ENCODE measurements at regions of chr16 and their contacts with region 1.

Region 1: GRCh38 chr16:71499775-71500364 is 10.7 kb upstream of the ZNF19 start:
- DNase-seq: peak in 8 of 9 donors; percentile 24 to 65 (median 48)
- ATAC-seq: peak; percentile 82
- H3K4me3 ChIP-seq: no peak overlapping the region
- H3K4me3 Mint-ChIP-seq: no peak overlapping the region
- H3K27ac ChIP-seq: no peak overlapping the region
- H3K27ac Mint-ChIP-seq: no peak overlapping the region
- H3K4me1 ChIP-seq: no peaks in the 10 kb centered on the region
- H3K4me1 Mint-ChIP-seq: no peaks in the 10 kb centered on the region
- H3K27me3 ChIP-seq: no peaks in the 10 kb centered on the region
- H3K27me3 Mint-ChIP-seq: peaks cover 0 to 17% (median 5%) of the 10 kb centered on the region in 5 donors

Region 2: DNA sequence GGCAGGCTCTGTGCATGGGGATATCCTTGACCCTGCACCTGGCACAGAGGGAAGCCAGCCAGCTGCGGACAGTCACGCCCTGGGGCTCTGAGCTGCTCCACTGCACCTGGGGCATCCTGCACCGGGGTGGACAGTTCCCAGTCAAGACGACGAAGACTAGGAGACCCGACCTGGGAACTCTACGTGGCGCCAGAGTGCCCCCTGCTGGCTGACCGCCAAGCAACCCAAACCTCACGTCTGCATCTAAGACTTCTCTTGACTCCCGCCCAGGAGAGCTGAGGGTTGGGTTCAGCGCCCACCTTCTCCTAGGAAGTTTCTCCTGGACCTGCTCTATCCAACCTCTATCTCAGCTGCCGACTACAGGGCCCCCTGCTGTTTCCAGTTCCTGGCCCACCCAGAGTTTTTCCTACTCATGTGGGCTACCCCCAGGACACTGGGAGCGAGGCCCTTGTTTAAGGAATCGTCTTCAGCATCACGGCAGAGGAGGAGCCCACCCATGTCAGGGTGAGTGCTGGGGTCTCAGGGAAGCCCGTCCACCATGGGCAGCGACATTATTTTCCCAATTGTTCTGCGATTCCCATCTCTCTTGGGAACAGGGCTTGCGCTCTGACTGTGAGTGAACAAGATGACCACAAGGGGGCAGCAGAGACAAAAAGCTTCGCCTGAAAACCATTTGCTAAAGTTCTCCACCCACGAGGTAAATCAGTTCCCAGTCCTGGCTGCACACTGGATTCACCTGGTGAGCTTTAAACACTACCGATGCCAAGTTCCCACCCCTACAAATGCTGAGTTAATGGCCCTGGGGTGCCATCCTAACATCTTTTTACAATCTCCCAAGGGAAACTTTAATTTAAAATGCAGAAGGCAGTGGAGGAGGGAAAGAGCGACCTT is 87.4 kb before region 1 on chr16:
- CTCF ChIA-PET with region 1: interaction called, 104 read pairs
- POLR2A ChIA-PET with region 1: no interaction called
- intact Hi-C with region 1: loop called (anchors 1 kb)
- DNase-seq: peak; percentile 32 to 66 (median 55)
- ATAC-seq: peak; percentile 80
- H3K4me3 ChIP-seq: no peak overlapping the region
- H3K4me3 Mint-ChIP-seq: peak overlapping the region in 1 of 10 donors; percentile 19
- H3K27ac ChIP-seq: no peak overlapping the region
- H3K27ac Mint-ChIP-seq: no peak overlapping the region
- H3K4me1 ChIP-seq: peaks cover 3 to 9% of the 10 kb centered on the region in 2 donors
- H3K4me1 Mint-ChIP-seq: peaks cover 0 to 11% (median 5%) of the 10 kb centered on the region in 7 donors
- H3K27me3 ChIP-seq: peaks cover 0 to 7% of the 10 kb centered on the region in 2 donors
- H3K27me3 Mint-ChIP-seq: peaks cover 27 to 59% (median 39%) of the 10 kb centered on the region in 5 donors

Region 3: DNA sequence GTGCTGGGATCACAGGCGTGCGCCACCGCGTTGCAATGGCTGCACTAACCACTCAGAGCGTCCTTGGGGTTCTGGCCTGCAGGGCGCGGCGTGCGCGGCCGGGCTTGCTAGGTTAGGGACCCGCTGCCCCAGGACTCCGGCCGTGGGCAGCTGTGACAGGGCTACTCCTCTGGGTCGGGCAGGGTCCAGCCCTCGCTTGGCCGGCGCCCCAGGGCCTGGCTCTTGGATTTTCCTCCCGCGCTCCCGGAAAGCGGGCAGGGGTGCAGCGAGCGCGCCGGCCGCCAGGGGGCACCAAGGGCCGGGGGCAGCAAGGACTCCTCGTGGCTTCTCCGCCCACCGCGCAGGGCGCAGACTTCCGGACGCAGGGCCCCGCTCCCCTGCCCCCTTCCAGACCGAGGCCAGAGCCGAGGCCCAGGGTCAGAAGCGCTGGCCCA is 58.5 kb before region 1 on chr16:
- CTCF ChIA-PET with region 1: interaction called, 5 read pairs
- POLR2A ChIA-PET with region 1: no interaction called
- intact Hi-C with region 1: loop called in 1 of 2 experiments (anchors 5 kb)
- DNase-seq: peak in 8 of 9 donors; percentile 7 to 33 (median 14)
- ATAC-seq: peak; percentile 33
- H3K4me3 ChIP-seq: no peak overlapping the region
- H3K4me3 Mint-ChIP-seq: no peak overlapping the region
- H3K27ac ChIP-seq: no peak overlapping the region
- H3K27ac Mint-ChIP-seq: no peak overlapping the region
- H3K4me1 ChIP-seq: no peaks in the 10 kb centered on the region
- H3K4me1 Mint-ChIP-seq: peaks cover 0 to 10% (median 0%) of the 10 kb centered on the region in 7 donors
- H3K27me3 ChIP-seq: no peaks in the 10 kb centered on the region
- H3K27me3 Mint-ChIP-seq: peaks cover 0 to 46% (median 24%) of the 10 kb centered on the region in 5 donors

Region 4: GRCh38 chr16:71461686-71462648 is 37.9 kb before region 1 on chr16 and contains the start of gene ZNF23:
- CTCF ChIA-PET with region 1: interaction called, 4 read pairs
- POLR2A ChIA-PET with region 1: no interaction called
- intact Hi-C with region 1: loop called (anchors 5 kb)
- DNase-seq: peak; percentile 53 to 84 (median 72)
- ATAC-seq: peak; percentile 99
- H3K4me3 ChIP-seq: peak within 1 kb of the TSS; percentile 92
- H3K4me3 Mint-ChIP-seq: peak within 1 kb of the TSS; percentile 88 to 97 (median 94)
- H3K27ac ChIP-seq: peak within 1 kb of the TSS; percentile 87
- H3K27ac Mint-ChIP-seq: peak within 1 kb of the TSS; percentile 85 to 98 (median 92)
- H3K4me1 ChIP-seq: peaks cover 4 to 6% of the 10 kb centered on the region in 2 donors
- H3K4me1 Mint-ChIP-seq: peaks cover 13 to 39% (median 27%) of the 10 kb centered on the region in 7 donors
- H3K27me3 ChIP-seq: no peaks in the 10 kb centered on the region
- H3K27me3 Mint-ChIP-seq: no peaks in the 10 kb centered on the region
- total RNA-seq, gene ZNF23: 6.5 to 16.0 (median 8.8) TPM

Region 5: GRCh38 chr16:71658771-71659170 is 158.9 kb after region 1 on chr16:
- CTCF ChIA-PET with region 1: no interaction called
- POLR2A ChIA-PET with region 1: no interaction called
- intact Hi-C with region 1: no loop called
- DNase-seq: no peak
- ATAC-seq: no peak
- H3K4me3 ChIP-seq: no peak overlapping the region
- H3K4me3 Mint-ChIP-seq: no peak overlapping the region
- H3K27ac ChIP-seq: no peak overlapping the region
- H3K27ac Mint-ChIP-seq: no peak overlapping the region
- H3K4me1 ChIP-seq: no peaks in the 10 kb centered on the region
- H3K4me1 Mint-ChIP-seq: peaks cover 0 to 4% (median 0%) of the 10 kb centered on the region in 7 donors
- H3K27me3 ChIP-seq: no peaks in the 10 kb centered on the region
- H3K27me3 Mint-ChIP-seq: no peaks in the 10 kb centered on the region

Region 6: DNA sequence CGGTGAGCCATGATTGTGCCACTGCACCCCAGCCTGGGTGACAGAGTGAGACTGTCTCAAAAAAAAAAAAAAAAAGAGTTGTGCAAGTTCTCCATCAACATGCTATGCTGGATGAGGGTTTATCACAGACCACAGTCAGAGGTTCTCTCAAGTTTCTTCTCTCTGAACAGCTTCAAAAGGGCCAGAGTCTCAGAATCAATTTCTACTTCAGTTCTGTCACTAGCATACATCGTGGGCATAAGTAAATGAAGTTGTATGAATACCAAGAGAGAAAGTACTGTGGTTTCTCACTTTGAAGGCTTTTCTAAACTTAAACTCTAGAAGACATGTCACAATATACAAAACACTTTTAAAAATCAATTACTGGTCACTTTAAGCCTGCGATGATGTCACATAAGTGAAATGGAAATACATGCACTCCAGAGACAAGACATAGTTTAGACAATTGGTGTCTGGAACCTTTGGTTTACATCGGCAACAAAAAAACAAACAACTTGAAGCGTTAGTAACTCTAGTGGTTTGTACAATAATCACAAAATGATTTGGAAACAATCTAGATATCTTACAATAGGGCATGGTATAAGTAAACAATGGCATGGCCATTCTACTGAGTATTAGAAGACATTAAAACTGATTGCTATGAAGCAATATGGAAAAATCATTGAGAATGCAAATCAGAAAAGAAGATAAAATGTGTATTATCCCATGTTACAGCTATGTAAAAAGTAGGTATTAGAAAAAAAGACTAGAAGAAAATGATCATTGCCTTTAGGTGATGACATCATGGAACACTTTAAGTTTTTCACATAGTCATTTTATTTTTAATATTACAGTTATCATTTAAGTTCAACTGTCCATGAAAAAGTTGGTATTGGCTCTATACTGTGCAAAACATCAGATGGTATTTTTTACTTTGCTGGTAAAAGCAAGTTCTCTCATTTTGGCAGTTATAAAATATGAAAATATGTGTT is 1315.8 kb after region 1 on chr16:
- CTCF ChIA-PET with region 1: no interaction called
- POLR2A ChIA-PET with region 1: no interaction called
- intact Hi-C with region 1: no loop called
- DNase-seq: no peak
- ATAC-seq: no peak
- H3K4me3 ChIP-seq: no peak overlapping the region
- H3K4me3 Mint-ChIP-seq: no peak overlapping the region
- H3K27ac ChIP-seq: no peak overlapping the region
- H3K27ac Mint-ChIP-seq: no peak overlapping the region
- H3K4me1 ChIP-seq: no peaks in the 10 kb centered on the region
- H3K4me1 Mint-ChIP-seq: peaks cover 0 to 2% (median 0%) of the 10 kb centered on the region in 7 donors
- H3K27me3 ChIP-seq: no peaks in the 10 kb centered on the region
- H3K27me3 Mint-ChIP-seq: peaks cover 0 to 4% (median 0%) of the 10 kb centered on the region in 5 donors

Measured in naive thymus-derived CD4-positive, alpha-beta T cell (primary cell).